ENCODE measurements at regions of chr4 and their contacts with region 1.

Region 1: DNA sequence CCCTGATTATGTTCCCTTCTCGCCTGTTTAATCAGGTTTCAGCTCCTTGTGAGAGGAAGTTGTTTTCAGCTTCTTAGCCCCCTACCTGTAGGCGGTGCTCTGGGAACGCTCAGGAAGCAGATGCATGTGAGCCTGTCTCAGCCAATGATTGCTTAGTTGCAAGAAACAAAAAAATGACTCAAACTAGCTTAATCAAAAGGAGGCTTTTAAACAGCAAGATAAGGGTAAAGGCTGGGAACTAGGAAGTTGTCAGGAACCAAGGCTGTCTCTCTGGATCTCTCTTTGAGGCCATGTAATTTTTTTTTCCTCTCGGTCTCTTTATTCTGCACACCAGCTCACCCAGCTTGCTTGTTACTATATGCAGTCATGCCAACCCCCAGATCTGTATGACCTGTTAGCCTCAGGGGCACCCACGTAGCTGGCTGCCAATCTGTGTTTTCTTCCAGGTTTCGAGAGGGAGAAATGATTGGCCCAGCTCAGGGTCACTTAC is 109.1 kb downstream of the PTTG2 start:
- DNase-seq: peak; percentile 53
- ATAC-seq: peak; percentile 92
- H3K4me3 Mint-ChIP-seq: no peak overlapping the region
- H3K27ac Mint-ChIP-seq: peak overlapping the region; percentile 57
- H3K4me1 Mint-ChIP-seq: peaks cover 24% of the 10 kb centered on the region
- H3K27me3 Mint-ChIP-seq: no peaks in the 10 kb centered on the region
- CTCF ChIP-seq: 0 out of 2 replicates have a peak, but pooled peaks have one; percentile 13

Region 2: DNA sequence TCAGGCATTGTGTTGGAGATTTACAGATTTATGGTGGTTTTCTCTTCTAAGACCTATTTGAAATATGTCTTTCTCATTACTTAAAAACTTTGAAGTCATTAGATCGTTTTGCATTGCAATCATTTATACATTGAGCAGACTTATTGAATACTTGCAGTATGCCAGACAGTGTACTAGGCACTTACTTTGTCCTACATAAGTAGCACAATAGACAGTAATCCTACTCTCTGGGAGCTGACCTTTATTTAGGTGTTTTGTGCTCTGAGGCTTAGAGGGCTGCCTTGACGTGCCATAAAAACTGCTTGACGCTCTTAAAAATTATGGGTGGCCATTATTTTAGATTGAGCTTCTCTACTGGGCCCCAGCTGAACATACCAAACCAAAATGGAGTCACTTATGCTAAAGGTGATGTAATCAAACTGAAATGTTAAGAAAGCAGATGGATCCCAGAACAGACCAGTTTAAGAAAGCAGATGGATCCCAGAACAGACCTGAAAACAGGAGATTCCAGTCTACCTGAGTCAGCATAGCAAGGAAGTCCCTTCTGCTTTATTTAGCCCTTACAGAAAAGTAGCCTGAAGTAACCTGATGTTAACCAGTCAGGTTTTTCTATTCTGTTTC is 66.8 kb before region 1 on chr4:
- CTCF ChIA-PET with region 1: no interaction called
- POLR2A ChIA-PET with region 1: no interaction called
- DNase-seq: no peak
- ATAC-seq: peak; percentile 15; the same call in 1 of the 2 replicates
- H3K4me3 Mint-ChIP-seq: no peak overlapping the region
- H3K27ac Mint-ChIP-seq: peak overlapping the region; percentile 82
- H3K4me1 Mint-ChIP-seq: peaks cover 74% of the 10 kb centered on the region
- H3K27me3 Mint-ChIP-seq: no peaks in the 10 kb centered on the region
- CTCF ChIP-seq: no peak

Region 3: GRCh38 chr4:38084877-38085711 is 15.8 kb after region 1 on chr4:
- CTCF ChIA-PET with region 1: interaction called, 47 read pairs
- POLR2A ChIA-PET with region 1: no interaction called
- DNase-seq: no peak
- ATAC-seq: peak; percentile 9; the same call in 1 of the 2 replicates
- H3K4me3 Mint-ChIP-seq: no peak overlapping the region
- H3K27ac Mint-ChIP-seq: no peak overlapping the region
- H3K4me1 Mint-ChIP-seq: peaks cover 53% of the 10 kb centered on the region
- H3K27me3 Mint-ChIP-seq: no peaks in the 10 kb centered on the region
- CTCF ChIP-seq: no peak

Region 4: DNA sequence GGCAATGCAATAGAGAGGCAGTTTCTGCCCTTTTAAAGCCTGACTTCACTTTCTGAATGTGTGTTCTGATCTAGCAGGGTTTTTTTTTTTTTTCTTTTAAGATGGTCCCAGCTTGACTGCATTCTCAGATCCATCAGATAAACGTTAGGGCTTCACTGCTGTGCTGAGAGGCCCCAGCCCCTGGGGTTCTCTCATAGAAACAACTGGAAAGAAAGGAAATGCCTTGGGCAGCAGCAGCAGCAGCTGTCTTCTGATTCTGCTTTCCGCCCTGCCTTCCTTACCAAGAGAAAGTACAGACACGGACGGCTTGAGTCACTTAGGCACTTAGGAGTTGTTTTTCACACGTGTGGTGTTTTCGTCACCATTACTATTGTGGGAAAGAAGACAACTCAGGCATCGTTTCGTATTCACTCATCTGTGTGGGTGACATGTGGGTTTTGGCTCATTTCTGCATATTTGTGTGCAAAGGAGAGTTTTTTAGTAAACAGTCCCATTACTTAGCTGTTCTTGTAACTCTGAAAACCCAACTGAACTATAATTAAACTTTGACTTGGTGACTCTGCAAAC is 62.9 kb after region 1 on chr4:
- CTCF ChIA-PET with region 1: interaction called, 12 read pairs
- POLR2A ChIA-PET with region 1: no interaction called
- DNase-seq: no peak
- ATAC-seq: peak; percentile 41
- H3K4me3 Mint-ChIP-seq: no peak overlapping the region
- H3K27ac Mint-ChIP-seq: peak overlapping the region; percentile 59; the same call in 1 of the 2 replicates
- H3K4me1 Mint-ChIP-seq: peaks cover 55% of the 10 kb centered on the region
- H3K27me3 Mint-ChIP-seq: peaks cover 38% of the 10 kb centered on the region
- CTCF ChIP-seq: no peak

Region 5: DNA sequence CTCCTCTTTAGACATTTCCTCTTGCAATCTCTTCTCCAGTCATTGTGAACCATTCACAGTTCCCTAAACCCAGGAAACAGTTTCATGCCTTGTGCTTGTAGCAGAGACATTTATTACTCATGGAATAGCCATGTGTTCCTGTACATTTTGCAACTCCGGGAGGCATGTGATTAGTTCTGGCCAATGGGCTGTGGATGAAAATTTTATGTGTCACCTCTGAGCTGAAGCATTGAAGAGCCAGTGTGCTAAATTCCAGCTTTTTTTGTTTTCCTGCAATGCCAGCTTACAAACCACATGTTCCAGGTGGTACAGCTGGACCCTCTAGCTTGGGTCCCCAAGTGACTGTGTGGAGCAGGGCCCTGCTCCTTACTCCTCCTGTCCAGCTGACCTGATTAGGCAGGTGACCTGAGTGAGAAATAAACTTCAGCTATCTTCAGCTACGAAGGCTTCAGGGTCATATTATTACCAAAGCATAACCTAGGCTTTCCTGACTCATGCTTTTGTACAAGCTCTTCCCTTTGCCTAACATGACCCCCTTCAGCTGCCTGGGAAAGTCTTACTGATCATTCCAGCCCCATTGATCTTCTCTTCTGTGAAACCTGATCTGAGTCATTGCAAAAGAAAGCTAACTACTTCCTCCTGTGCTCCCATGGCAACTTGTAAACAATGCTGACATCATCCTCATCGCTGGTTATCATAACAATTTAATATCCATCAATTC is 91.3 kb after region 1 on chr4:
- CTCF ChIA-PET with region 1: interaction called, 13 read pairs
- POLR2A ChIA-PET with region 1: no interaction called
- DNase-seq: no peak
- ATAC-seq: peak; percentile 76
- H3K4me3 Mint-ChIP-seq: no peak overlapping the region
- H3K27ac Mint-ChIP-seq: no peak overlapping the region
- H3K4me1 Mint-ChIP-seq: peaks cover 23% of the 10 kb centered on the region
- H3K27me3 Mint-ChIP-seq: no peaks in the 10 kb centered on the region; the same call in 1 of the 2 replicates
- CTCF ChIP-seq: no peak

Region 6: GRCh38 chr4:38174801-38175200 is 105.5 kb after region 1 on chr4:
- CTCF ChIA-PET with region 1: interaction called, 36 read pairs
- POLR2A ChIA-PET with region 1: no interaction called
- DNase-seq: no peak
- ATAC-seq: no peak
- H3K4me3 Mint-ChIP-seq: no peak overlapping the region
- H3K27ac Mint-ChIP-seq: no peak overlapping the region
- H3K4me1 Mint-ChIP-seq: peaks cover 8% of the 10 kb centered on the region
- H3K27me3 Mint-ChIP-seq: no peaks in the 10 kb centered on the region; the same call in 1 of the 2 replicates
- CTCF ChIP-seq: no peak

Measured in WTC11 (cell line).